ENCODE measurements at regions of chr16 and their contacts with region 1.

Region 1: DNA sequence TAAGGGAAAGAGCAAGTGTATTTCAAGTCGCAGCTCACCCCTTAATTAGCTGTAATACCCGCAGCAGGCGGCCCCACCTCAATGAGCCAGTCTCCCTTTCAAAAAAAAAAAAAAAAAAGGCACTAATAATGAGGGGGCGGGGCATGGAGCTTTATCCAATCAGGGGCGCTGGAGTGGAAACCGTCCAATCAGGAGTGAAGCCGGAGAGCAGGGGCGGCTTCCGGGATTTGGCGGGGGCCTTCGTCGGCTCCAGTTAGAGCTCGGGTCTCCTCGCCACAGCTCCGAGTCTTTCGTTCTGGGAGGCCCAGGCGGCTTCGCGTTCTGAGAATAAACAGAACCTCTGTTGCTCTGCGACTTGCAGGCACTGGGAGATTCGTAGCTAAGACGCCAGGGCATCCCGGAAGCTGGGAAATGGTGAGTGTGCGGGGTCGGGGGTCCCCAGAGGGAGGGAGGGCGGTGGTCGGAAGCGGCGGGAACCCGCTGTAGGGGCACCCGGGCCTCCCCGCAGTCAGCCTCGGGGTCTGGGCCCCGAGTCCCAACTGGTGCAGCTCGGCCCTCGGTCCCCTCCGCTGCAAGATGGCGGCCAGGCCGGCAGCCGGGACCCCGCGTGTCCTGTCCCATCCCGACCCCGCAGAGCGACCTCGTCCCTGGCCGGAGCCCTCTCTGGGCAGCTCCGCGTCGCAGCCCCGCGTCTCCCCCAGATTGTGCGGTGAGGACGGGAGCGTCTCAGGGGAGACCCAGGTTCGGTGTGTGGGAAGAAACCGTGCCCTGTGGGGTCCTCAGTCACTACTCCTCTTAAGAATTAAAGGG is at the start of gene ZNF267:
- DNase-seq: peak; percentile 91 to 96
- ATAC-seq: peak; percentile 95 to 98 (median 96)
- H3K4me3 ChIP-seq: peak within 1 kb of the TSS; percentile 79 to 98 (median 91)
- H3K27ac ChIP-seq: peak within 1 kb of the TSS; percentile 58 to 99 (median 87)
- H3K4me1 ChIP-seq: peaks cover 0 to 74% (median 31%) of the 10 kb centered on the region in 9 donors
- H3K27me3 ChIP-seq: no peaks in the 10 kb centered on the region
- CTCF ChIP-seq: no peak
- total RNA-seq, gene ZNF267: 4.0 to 13.5 (median 5.7) TPM

Region 2: GRCh38 chr16:30957456-30958174 is 916.1 kb before region 1 on chr16 and contains the start of gene SETD1A:
- intact Hi-C with region 1: loop called in 1 of 10 experiments (anchors 10 kb)
- DNase-seq: peak; percentile 96 to 99
- ATAC-seq: peak; percentile 90 to 97 (median 94)
- H3K4me3 ChIP-seq: peak within 1 kb of the TSS; percentile 70 to 99 (median 85)
- H3K27ac ChIP-seq: peak within 1 kb of the TSS; percentile 91 to 100 (median 99)
- H3K4me1 ChIP-seq: peaks cover 6 to 36% (median 29%) of the 10 kb centered on the region in 9 donors
- H3K27me3 ChIP-seq: no peaks in the 10 kb centered on the region
- CTCF ChIP-seq: no peak
- total RNA-seq, gene SETD1A: 7.5 to 11.4 (median 9.2) TPM

Region 3: DNA sequence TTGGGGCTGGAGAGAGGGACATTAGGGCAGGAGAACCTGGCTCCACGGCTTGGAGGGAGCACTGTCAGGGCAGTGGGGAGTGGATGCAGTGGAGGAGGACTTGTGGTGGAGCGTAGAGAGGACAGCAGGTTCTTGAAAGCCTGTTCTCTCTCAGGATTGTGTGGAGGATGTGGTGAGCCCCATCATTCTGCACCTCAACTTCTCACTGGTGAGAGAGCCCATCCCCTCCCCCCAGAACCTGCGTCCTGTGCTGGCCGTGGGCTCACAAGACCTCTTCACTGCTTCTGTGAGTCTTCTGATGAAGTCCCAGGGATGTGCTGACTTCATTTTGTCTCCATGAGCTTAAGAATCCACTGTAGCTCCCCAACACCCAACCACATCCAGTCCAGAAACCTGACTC is 459.1 kb before region 1 on chr16:
- intact Hi-C with region 1: no loop called
- DNase-seq: no peak
- ATAC-seq: no peak
- H3K4me3 ChIP-seq: no peak overlapping the region
- H3K27ac ChIP-seq: no peak overlapping the region
- H3K4me1 ChIP-seq: no peaks in the 10 kb centered on the region
- H3K27me3 ChIP-seq: peaks cover 0 to 11% (median 0%) of the 10 kb centered on the region in 7 donors
- CTCF ChIP-seq: no peak

Region 4: GRCh38 chr16:31700526-31701388 is 173.0 kb before region 1 on chr16:
- intact Hi-C with region 1: loop called in 1 of 10 experiments (anchors 10 kb)
- DNase-seq: peak; percentile 79 to 81
- ATAC-seq: peak; percentile 34 to 98 (median 94)
- H3K4me3 ChIP-seq: peak overlapping the region; percentile 56 to 98 (median 81)
- H3K27ac ChIP-seq: peak overlapping the region in 8 of 10 donors; percentile 25 to 84 (median 50)
- H3K4me1 ChIP-seq: peaks cover 0 to 21% (median 11%) of the 10 kb centered on the region in 9 donors
- H3K27me3 ChIP-seq: peaks cover 0 to 17% (median 0%) of the 10 kb centered on the region in 7 donors
- CTCF ChIP-seq: peak in 6 of 9 donors; percentile 17 to 44 (median 27)

Region 5: DNA sequence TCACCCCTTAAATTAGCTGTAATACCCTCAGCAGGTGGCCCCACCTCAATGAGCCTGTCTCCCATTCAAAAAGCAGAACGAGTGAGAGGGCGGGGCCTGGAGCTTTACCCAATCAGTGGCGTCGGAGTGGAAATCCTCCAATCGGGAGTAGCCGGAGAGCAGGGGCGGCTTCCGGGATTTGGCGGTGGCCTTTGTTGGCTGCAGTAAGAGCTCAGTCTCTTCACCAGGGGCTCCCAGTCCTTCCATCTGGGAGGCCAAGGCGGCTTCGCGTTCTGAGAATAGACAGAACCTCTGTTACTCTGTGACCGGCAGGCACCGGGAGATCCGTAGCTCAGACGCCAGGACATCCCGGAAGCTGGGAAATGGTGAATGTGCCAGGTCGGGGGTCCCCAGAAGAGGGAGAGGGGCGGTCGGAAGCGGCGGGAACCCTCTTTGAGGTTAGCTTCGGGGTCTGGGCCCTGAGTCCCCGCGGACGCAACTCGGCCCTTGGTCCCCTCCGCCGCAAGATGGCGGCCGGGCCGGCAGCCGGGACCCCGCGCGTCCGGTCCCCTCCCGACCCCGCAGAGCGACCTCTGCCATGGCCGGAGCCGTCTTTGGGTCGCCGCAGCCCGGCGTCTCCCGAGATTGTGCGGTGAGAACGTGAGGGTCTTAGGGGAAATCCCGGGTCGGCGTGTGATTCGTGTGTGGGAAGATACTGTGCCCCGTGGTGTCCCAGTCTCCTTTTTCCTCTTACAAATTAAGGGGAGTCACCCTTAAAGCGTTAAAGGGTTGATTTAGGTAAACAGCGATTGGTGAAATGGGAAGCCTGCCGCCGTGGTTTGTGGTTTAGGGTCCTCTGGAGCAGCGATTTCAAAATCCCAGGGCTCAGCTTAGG is 160.5 kb before region 1 on chr16:
- intact Hi-C with region 1: loop called in 4 of 10 experiments (anchors 10 kb)
- DNase-seq: peak; percentile 91 to 95
- ATAC-seq: peak; percentile 93 to 98 (median 97)
- H3K4me3 ChIP-seq: peak overlapping the region; percentile 70 to 98 (median 84)
- H3K27ac ChIP-seq: peak overlapping the region; percentile 77 to 99 (median 95)
- H3K4me1 ChIP-seq: peaks cover 7 to 35% (median 22%) of the 10 kb centered on the region in 9 donors
- H3K27me3 ChIP-seq: no peaks in the 10 kb centered on the region
- CTCF ChIP-seq: peak in 2 of 9 donors; percentile 9 to 14

Region 6: GRCh38 chr16:31899505-31899904 is 25.7 kb after region 1 on chr16:
- intact Hi-C with region 1: no loop called
- DNase-seq: no peak
- ATAC-seq: no peak
- H3K4me3 ChIP-seq: no peak overlapping the region
- H3K27ac ChIP-seq: no peak overlapping the region
- H3K4me1 ChIP-seq: peaks cover 0 to 5% (median 0%) of the 10 kb centered on the region in 9 donors
- H3K27me3 ChIP-seq: no peaks in the 10 kb centered on the region
- CTCF ChIP-seq: no peak